AG04450 (cell line): ENCODE measurements at regions of chr10 and their contacts with region 1.

Region 1: GRCh38 chr10:29998142-29998808 is 61.1 kb downstream of the JCAD start:
- DNase-seq: peak; percentile 59
- H3K4me3 ChIP-seq: no peak overlapping the region
- H3K27ac ChIP-seq: no peak overlapping the region
- H3K27me3 ChIP-seq: peaks cover 2% of the 10 kb centered on the region
- CTCF ChIP-seq: peak; percentile 100

Region 2: DNA sequence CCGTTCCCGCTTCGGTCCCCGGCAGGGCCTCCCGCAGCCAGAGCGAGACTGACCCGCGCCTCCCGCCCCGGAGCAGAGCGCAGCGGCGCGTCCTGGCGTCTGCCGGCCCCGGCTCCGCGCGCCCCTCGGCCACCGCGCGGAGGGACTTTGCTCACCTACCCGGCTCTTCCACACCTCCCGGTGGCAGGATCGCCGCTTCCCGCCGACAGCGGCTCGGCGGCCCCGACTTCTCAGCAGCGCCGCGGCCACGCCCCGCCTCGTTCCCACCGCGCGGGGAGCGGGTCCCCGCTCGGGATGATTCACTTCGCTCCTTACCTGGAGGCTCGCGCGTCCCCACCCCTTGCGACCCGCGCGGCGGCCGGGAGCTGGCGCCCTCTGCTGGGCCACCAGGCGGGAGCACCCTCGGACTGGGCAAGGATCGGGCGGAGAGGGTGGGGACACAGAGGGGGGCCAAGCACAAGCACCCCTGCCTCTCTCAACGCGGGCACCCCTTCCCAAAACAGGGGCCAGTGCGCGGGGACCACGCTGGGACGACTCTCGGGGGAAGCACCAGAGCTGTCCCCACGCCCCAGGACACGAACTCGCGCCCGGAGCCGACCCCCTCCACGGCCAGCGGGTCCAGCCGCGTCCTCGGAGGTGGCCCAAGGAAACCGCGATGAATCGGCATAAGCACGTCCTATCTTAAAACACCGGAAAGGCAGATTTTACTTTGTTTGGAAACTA is 262.5 kb before region 1 on chr10:
- CTCF ChIA-PET with region 1: no interaction called
- POLR2A ChIA-PET with region 1: no interaction called
- DNase-seq: no peak
- H3K4me3 ChIP-seq: peak overlapping the region; percentile 85
- H3K27ac ChIP-seq: peak overlapping the region; percentile 75
- H3K27me3 ChIP-seq: no peaks in the 10 kb centered on the region
- CTCF ChIP-seq: peak; percentile 82

Region 3: GRCh38 chr10:29760139-29760538 is 238.1 kb before region 1 on chr10:
- CTCF ChIA-PET with region 1: interaction called, 10 read pairs
- POLR2A ChIA-PET with region 1: no interaction called
- DNase-seq: no peak
- H3K4me3 ChIP-seq: no peak overlapping the region
- H3K27ac ChIP-seq: peak overlapping the region; percentile 2
- H3K27me3 ChIP-seq: no peaks in the 10 kb centered on the region
- CTCF ChIP-seq: no peak

Region 4: DNA sequence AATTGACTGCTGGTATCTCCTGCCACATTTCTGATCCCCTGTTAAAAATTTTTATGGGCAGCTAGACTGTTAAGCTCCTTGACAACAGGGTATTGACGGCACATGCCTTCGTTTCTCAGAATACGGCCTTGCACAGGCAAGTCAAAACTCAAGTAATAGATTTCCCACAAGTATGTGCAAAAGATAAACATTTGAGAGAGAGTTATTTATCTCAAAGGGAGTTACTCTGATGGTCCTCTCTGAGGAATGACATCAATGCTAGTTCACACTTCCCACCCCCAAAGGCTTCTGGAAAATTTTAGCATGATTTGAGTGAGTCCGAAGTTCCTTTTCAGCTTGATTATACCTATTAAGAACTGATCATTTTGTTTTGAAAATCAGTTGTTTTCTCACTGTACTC is 10.8 kb before region 1 on chr10:
- CTCF ChIA-PET with region 1: interaction called, 19 read pairs
- POLR2A ChIA-PET with region 1: no interaction called
- DNase-seq: peak; percentile 46
- H3K4me3 ChIP-seq: no peak overlapping the region
- H3K27ac ChIP-seq: no peak overlapping the region
- H3K27me3 ChIP-seq: peaks cover 6% of the 10 kb centered on the region
- CTCF ChIP-seq: no peak

Region 5: GRCh38 chr10:30359373-30360206 is 361.3 kb after region 1 on chr10:
- CTCF ChIA-PET with region 1: interaction called, 13 read pairs
- POLR2A ChIA-PET with region 1: no interaction called
- DNase-seq: no peak
- H3K4me3 ChIP-seq: no peak overlapping the region
- H3K27ac ChIP-seq: no peak overlapping the region
- H3K27me3 ChIP-seq: peaks cover 28% of the 10 kb centered on the region
- CTCF ChIP-seq: peak; percentile 89